Psoas muscle (tissue), 8 donors: ENCODE measurements at regions of chr9 and their contacts with region 1.

Region 1: DNA sequence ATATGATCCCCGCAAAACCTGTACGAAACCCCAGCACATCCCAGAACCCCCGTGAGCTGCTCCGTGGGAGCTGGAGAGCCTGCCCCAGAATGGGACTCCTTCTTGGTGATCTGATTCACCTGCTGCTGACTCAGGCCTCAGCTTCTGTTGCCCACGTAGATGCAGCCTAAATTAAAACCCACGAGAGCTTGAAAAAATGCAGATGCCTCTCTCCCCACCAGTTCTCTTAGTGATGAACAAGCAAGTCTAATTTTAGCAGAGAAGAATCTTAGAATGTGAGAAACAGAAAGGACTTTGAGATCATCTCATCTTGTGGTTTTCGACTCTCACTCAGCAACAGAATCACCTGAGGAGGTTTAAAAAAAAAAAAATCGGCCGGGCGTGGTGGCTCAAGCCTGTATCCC is 57.6 kb downstream of the TMOD1 start:
- DNase-seq: no peak
- ATAC-seq: peak; percentile 69 to 81 (median 74)
- H3K4me3 ChIP-seq: no peak overlapping the region
- H3K27ac ChIP-seq: peak overlapping the region; percentile 84
- H3K4me1 ChIP-seq: peaks cover 47% of the 10 kb centered on the region
- H3K27me3 ChIP-seq: no peaks in the 10 kb centered on the region
- CTCF ChIP-seq: no peak

Region 2: DNA sequence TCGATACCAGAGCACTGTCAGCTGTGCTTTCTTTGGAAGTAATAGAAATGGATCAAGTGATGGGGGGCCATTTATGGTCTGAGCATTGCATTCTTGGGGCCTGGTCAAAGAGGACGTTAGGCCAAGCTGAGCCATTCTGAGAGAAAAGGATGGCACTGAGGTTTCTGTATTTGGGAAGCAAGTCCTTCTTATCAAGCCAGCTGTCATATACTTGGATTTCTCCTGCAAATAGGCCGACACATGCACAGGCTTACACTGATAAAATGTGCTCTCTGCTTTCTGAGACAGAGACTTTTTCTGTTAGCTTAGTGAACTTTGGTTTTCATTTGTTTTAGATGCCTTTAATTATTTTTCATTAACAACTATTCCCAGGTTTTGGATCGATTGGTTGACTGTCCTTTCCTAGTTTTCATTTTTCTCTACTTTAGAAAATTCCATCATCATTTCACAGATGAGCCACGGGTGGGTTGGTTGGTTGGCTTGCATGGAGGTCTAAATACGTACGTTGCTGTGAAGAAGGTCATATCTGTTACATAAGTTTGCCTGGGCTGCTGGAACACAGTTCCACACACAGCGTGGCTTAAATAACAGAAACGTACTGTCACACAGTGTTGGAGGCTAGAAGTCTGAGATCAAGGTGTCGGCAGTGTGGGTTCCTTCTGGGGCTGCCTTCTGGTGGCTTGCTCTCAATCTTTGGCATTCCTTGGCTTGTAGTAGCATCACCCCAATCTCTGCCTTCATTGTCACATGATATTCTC is 37.4 kb before region 1 on chr9:
- intact Hi-C with region 1: loop called in 1 of 2 experiments (anchors 5 kb)
- DNase-seq: no peak
- ATAC-seq: no peak
- H3K4me3 ChIP-seq: no peak overlapping the region
- H3K27ac ChIP-seq: peak overlapping the region; percentile 88
- H3K4me1 ChIP-seq: peaks cover 93% of the 10 kb centered on the region
- H3K27me3 ChIP-seq: no peaks in the 10 kb centered on the region
- CTCF ChIP-seq: no peak